HepG2 (cell line): ENCODE measurements at regions of chr6 and their contacts with region 1.

Region 1: DNA sequence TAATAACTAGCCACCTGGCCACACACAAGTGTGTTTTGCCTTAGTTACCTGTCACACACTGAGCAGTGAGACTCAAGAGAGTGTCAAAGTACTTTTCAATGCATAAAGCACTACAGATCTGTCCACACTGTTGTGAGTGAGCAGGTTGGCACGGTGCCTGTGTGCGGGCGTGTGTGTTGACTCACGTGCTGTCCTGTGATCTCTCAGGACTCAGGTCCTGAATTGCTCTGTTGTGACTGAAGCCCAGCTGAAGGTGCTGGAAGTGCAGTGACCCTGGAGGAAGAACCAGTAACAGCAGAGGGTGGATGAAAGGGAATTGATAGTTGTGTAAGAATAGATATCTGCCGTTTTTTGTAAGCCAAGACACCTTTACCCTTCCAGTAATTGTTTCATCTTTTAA is 18.3 kb downstream of the SLC16A10 start:
- DNase-seq: peak; percentile 97
- ATAC-seq: peak; percentile 99
- H3K4me3 ChIP-seq: peak overlapping the region in 1 of 3 experiments; percentile 21; a peak in 1 of 6 replicates
- H3K27ac ChIP-seq: peak overlapping the region; percentile 46
- H3K4me1 ChIP-seq: peaks cover 38% of the 10 kb centered on the region
- H3K27me3 ChIP-seq: no peaks in the 10 kb centered on the region
- CTCF ChIP-seq: peak; percentile 16
- EP300 ChIP-seq: peak; percentile 50 to 81; a peak in 3 of 4 replicates
- POLR2A ChIP-seq: no peak
- RAD21 ChIP-seq: peak; percentile 40; the same call in 1 of the 2 replicates

Region 2: DNA sequence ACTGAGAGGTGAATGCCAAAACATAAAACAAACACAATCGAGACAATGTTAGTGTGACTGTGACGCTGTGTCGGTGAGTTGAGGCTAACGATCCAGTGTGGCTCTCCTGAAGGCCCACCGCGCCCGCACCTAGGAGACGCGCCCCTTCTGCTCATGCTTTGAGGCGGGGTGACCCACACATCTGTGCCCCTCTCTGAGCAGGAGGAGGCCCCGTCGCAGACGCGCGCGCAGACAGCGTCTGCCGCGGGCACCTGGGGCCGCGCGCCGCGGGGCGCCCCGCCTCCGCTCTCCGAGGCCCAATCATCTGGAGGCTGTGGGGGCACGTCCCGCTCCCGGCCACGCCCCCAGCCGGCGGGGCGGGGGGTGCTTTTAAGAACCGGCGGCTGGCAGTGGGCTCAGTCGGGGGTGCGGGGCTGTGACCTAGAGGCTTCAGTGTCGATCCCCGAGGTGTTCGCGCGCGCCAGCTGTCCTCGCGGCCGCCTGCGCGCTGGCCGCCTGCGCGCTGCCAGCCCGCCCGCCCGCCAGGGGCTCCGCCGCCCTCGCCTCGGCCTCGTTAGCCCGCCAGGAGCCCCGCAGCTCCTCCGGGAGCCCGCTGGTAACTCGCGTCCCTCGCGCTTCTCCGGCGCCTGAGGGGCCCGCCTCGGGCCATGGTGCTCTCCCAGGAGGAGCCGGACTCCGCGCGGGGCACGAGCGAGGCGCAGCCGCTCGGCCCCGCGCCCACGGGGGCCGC is 18.3 kb before region 1 on chr6 and contains the start of gene SLC16A10:
- CTCF ChIA-PET with region 1: no interaction called
- POLR2A ChIA-PET with region 1: interaction called, 4 read pairs
- in situ Hi-C with region 1: no loop called
- intact Hi-C with region 1: loop called (anchors 2 kb)
- DNase-seq: peak; percentile 65
- ATAC-seq: peak; percentile 88
- H3K4me3 ChIP-seq: peak within 1 kb of the TSS; percentile 67 to 85 (median 85)
- H3K27ac ChIP-seq: peak within 1 kb of the TSS; percentile 53
- H3K4me1 ChIP-seq: peaks cover 45% of the 10 kb centered on the region
- H3K27me3 ChIP-seq: no peaks in the 10 kb centered on the region
- CTCF ChIP-seq: no peak
- EP300 ChIP-seq: no peak
- POLR2A ChIP-seq: peak; percentile 91 to 94
- RAD21 ChIP-seq: peak; percentile 61; the same call in 1 of the 2 replicates
- total RNA-seq, gene SLC16A10: 11.3 and 20.1 TPM in 2 replicates

Region 3: DNA sequence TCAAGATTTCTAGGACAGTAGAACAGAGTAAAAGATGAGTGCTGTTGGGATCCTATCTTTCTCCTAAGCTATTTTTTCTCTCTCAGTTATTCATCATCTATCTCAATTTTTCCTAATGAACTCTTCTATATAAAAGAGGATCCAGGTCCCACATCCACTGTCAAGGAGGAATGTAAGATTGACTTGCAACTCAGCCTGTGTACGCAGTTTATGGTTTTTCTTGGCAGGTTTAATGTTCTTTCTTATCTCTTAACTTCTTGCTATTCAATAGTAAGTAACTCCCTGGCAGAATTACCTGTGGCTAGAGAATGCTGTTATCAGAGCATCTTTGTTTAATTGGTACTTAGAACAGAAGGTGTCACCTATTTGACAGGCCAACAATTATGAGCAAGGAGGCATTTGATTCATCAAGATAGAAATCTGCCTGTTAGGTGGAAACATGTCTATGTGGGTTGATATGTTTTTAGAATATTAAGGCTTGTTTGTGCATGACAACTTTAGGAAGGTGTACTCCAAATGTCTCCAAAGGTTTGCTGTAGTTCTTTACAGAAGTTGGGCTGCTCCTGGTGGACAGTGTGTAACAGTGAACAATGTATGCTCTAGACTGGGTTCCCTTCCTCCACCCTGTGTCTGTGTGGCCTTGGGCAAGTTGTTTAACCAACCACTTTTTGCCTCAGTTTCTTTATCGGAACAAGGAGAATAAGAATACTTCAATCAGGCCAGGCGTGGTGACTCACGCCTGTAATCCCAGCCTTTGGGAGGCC is 42.7 kb after region 1 on chr6:
- CTCF ChIA-PET with region 1: no interaction called
- POLR2A ChIA-PET with region 1: no interaction called
- in situ Hi-C with region 1: no loop called
- intact Hi-C with region 1: loop called (anchors 5 kb)
- DNase-seq: no peak
- ATAC-seq: no peak
- H3K4me3 ChIP-seq: no peak overlapping the region
- H3K27ac ChIP-seq: no peak overlapping the region
- H3K4me1 ChIP-seq: no peaks in the 10 kb centered on the region
- H3K27me3 ChIP-seq: no peaks in the 10 kb centered on the region
- CTCF ChIP-seq: no peak
- EP300 ChIP-seq: no peak
- POLR2A ChIP-seq: no peak
- RAD21 ChIP-seq: no peak